ENCODE measurements at regions of chr7 and their contacts with region 1.

Region 1: DNA sequence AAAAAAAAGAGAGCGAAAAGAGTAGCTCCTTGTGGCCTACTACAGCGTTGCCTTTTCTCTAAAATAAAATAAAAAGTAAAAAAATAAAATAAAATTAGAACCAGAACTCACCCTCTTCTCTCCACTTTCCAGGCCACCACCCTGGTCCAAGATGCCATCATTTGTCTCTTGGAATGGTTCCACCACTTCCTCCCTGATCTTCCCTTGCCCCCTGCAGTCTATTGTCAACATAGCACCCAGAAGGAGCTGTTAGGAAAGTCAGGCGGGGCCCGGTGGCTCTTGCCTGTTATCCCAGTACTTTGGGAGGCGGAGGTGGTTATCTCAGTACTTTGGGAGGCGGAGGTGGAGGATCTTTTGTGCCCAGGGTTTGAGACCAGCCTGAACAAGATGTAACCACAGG is 7.6 kb upstream of the GRID2IP start:
- DNase-seq: peak; percentile 47
- H3K4me3 Mint-ChIP-seq: no peak overlapping the region
- H3K27ac Mint-ChIP-seq: no peak overlapping the region
- H3K4me1 Mint-ChIP-seq: peaks cover 16% of the 10 kb centered on the region
- H3K27me3 Mint-ChIP-seq: no peaks in the 10 kb centered on the region

Region 2: DNA sequence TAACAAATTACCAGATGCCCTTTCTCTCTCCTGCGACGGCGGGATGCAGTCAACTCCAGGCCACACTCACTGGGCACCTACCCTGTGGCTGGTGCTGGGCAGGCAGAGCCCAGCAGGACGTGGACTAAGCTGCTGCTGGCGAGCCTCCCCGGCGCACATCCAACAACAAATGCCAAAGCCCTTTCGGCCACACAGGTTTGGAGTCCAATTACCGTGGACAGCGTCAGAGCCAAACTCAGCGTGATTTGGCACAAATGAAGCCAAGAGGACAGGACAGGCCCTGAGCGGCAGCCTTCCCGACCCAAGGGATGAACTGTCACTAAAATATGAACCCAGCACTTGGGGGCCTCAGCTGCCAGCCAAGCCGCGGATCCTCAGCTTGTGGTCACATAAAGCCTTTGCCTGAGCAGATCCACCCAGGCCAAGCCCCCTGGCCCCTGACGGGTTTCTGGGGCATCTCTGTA is 139.5 kb before region 1 on chr7:
- CTCF ChIA-PET with region 1: no interaction called
- DNase-seq: no peak
- H3K4me3 Mint-ChIP-seq: no peak overlapping the region
- H3K27ac Mint-ChIP-seq: no peak overlapping the region
- H3K4me1 Mint-ChIP-seq: peaks cover 14% of the 10 kb centered on the region
- H3K27me3 Mint-ChIP-seq: no peaks in the 10 kb centered on the region

Region 3: GRCh38 chr7:6516387-6516983 is 42.4 kb before region 1 on chr7:
- CTCF ChIA-PET with region 1: interaction called, 27 read pairs
- DNase-seq: peak; percentile 76
- H3K4me3 Mint-ChIP-seq: peak overlapping the region; percentile 65
- H3K27ac Mint-ChIP-seq: no peak overlapping the region
- H3K4me1 Mint-ChIP-seq: peaks cover 5% of the 10 kb centered on the region
- H3K27me3 Mint-ChIP-seq: peaks cover 11% of the 10 kb centered on the region

Region 4: GRCh38 chr7:6545398-6546126 is 13.3 kb before region 1 on chr7:
- CTCF ChIA-PET with region 1: interaction called, 12 read pairs
- DNase-seq: no peak
- H3K4me3 Mint-ChIP-seq: no peak overlapping the region
- H3K27ac Mint-ChIP-seq: no peak overlapping the region
- H3K4me1 Mint-ChIP-seq: peaks cover 9% of the 10 kb centered on the region
- H3K27me3 Mint-ChIP-seq: peaks cover 4% of the 10 kb centered on the region

Region 5: DNA sequence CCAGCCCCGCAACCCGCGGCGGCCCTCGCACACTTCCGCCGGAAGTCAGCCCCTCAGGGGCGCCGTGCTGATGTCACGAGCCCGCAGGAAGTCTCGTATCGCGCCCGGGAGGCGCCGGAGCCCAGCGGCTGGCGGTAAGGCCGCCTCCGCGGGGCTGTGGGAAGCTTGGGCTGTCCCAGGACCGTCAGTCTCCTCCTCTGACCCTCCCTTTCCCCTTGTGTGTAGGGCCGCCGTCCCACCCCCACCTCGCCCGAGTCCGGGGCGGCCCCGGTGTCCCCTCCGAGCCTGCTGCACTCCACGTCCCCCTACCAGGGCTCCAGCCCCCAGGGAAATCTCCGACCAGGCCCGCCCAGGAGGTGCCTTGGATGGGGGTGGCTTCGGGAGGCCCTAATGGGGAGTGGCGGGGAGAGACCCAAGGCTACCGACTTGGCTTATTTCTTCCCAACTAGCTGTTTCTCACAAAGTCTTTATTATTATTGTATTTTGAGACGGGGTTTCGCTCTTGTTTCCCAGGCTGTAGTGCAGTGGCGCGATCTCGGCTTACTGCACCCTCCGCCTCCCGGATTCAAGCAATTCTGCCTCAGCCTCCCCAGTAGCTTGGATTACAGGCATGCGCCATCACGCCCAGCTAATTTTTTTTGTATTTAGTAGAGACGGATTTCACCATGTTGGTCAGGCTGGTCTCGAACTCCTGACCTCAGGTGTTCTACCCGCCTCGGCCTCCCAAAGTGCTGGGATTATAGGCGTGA is 18.7 kb after region 1 on chr7 and contains the start of gene ZDHHC4:
- CTCF ChIA-PET with region 1: interaction called, 10 read pairs
- DNase-seq: peak; percentile 90
- H3K4me3 Mint-ChIP-seq: peak within 1 kb of the TSS; percentile 88
- H3K27ac Mint-ChIP-seq: peak within 1 kb of the TSS; percentile 86
- H3K4me1 Mint-ChIP-seq: peaks cover 44% of the 10 kb centered on the region
- H3K27me3 Mint-ChIP-seq: peaks cover 7% of the 10 kb centered on the region

Measured in activated naive CD4-positive, alpha-beta T cell treated with anti-CD3 and anti-CD28 coated beads, Interleukin-2, amount 10 ng/mL, durations not matched to agents 7 days and 5 days (primary cell).